H1 (cell line): ENCODE measurements at regions of chr2 and their contacts with region 1.

Region 1: GRCh38 chr2:227766373-227766883 is 20.7 kb downstream of the SCYGR8 start:
- DNase-seq: peak; percentile 70 to 89
- H3K4me3 ChIP-seq: no peak overlapping the region
- H3K27ac ChIP-seq: no peak overlapping the region
- H3K4me1 ChIP-seq: no peaks in the 10 kb centered on the region
- H3K27me3 ChIP-seq: no peaks in the 10 kb centered on the region
- CTCF ChIP-seq: peak; percentile 75 to 91 (median 84)
- EP300 ChIP-seq: no peak
- POLR2A ChIP-seq: no peak
- RAD21 ChIP-seq: peak; percentile 99 to 100

Region 2: DNA sequence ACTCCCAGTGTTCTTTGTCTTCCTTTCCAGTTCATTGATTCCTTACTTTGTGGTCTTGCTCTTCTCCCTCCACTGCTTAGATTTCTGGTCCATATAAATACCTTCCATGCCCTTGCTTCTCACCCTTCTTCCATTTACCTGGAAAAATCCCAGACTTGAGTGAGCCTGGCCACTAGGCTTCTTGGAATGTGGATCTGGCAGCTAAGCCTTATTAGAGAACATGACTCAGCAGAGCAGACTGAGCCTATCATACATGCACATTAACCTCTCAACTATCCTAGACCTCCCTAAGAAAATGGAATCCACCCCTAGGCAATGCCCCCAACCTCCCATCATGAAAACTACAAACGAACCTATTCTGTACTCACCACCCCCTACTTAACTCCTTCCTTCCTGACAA is 802.9 kb before region 1 on chr2:
- CTCF ChIA-PET with region 1: no interaction called
- POLR2A ChIA-PET with region 1: no interaction called
- DNase-seq: no peak
- H3K4me3 ChIP-seq: no peak overlapping the region
- H3K27ac ChIP-seq: no peak overlapping the region
- H3K4me1 ChIP-seq: peaks cover 0 to 6% (median 0%) of the 10 kb centered on the region in 4 experiments; a peak in 2 of 7 replicates
- H3K27me3 ChIP-seq: no peaks in the 10 kb centered on the region
- CTCF ChIP-seq: no peak
- EP300 ChIP-seq: no peak
- POLR2A ChIP-seq: no peak
- RAD21 ChIP-seq: no peak

Region 3: DNA sequence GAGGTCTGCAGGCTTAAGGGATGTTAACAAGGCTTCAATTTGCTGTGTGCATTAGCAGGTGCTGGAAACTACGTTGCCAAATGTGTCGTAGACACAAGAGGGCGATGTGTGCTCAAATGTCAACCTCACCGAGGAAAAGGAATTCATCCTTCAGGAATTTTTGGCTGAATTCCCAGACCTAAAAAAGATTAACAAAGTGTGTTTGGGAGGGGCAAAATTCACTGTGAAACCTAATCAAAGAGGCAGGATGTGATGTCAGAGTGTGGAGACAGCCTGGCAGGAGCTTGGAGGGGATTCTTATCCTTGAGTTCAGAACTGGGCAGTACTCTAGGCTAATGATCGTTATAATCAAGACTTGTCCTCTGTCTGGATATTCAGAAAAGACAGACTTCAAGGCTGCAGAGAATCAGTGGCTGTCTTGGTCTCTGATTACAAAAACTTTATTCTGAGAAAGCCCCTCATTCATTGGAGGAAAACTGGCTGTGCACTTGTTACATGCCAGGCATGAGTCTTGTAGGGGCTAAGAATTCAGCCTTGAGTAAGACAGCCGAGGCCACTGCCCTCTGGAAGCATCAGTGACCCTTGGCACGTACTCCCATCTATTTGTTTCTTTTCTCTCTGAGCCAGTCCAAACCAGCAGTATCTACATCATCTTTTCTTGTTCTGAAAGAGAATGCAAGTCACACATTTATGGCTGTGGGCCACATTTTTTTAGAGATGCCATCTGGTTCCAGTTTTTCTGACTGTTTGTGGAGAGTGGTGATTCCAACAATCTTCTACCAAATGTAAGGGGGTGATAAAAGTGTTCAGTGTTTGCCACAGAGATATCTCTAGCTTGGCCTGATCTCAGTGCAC is 360.0 kb before region 1 on chr2:
- CTCF ChIA-PET with region 1: interaction called, 35 read pairs
- POLR2A ChIA-PET with region 1: no interaction called
- DNase-seq: peak; percentile 51 to 53
- H3K4me3 ChIP-seq: no peak overlapping the region
- H3K27ac ChIP-seq: no peak overlapping the region
- H3K4me1 ChIP-seq: no peaks in the 10 kb centered on the region
- H3K27me3 ChIP-seq: no peaks in the 10 kb centered on the region
- CTCF ChIP-seq: peak; percentile 50 to 86 (median 77)
- EP300 ChIP-seq: no peak
- POLR2A ChIP-seq: no peak; a peak in 1 of 3 replicates
- RAD21 ChIP-seq: peak; percentile 92 to 94

Region 4: GRCh38 chr2:227643990-227644551 is 122.4 kb before region 1 on chr2:
- CTCF ChIA-PET with region 1: interaction called, 21 read pairs
- POLR2A ChIA-PET with region 1: no interaction called
- DNase-seq: no peak
- H3K4me3 ChIP-seq: no peak overlapping the region
- H3K27ac ChIP-seq: no peak overlapping the region
- H3K4me1 ChIP-seq: peaks cover 0 to 3% (median 0%) of the 10 kb centered on the region in 4 experiments; a peak in 1 of 7 replicates
- H3K27me3 ChIP-seq: no peaks in the 10 kb centered on the region
- CTCF ChIP-seq: peak in 1 of 3 experiments; percentile 26; a peak in 2 of 4 replicates
- EP300 ChIP-seq: no peak
- POLR2A ChIP-seq: no peak
- RAD21 ChIP-seq: no peak; a peak in 1 of 4 replicates

Region 5: GRCh38 chr2:227665189-227665940 is 101.1 kb before region 1 on chr2:
- CTCF ChIA-PET with region 1: interaction called, 92 read pairs
- POLR2A ChIA-PET with region 1: no interaction called
- DNase-seq: no peak
- H3K4me3 ChIP-seq: no peak overlapping the region
- H3K27ac ChIP-seq: no peak overlapping the region
- H3K4me1 ChIP-seq: peaks cover 0 to 10% (median 4%) of the 10 kb centered on the region in 4 experiments; a peak in 4 of 7 replicates
- H3K27me3 ChIP-seq: no peaks in the 10 kb centered on the region
- CTCF ChIP-seq: no peak
- EP300 ChIP-seq: no peak
- POLR2A ChIP-seq: no peak
- RAD21 ChIP-seq: no peak

Region 6: DNA sequence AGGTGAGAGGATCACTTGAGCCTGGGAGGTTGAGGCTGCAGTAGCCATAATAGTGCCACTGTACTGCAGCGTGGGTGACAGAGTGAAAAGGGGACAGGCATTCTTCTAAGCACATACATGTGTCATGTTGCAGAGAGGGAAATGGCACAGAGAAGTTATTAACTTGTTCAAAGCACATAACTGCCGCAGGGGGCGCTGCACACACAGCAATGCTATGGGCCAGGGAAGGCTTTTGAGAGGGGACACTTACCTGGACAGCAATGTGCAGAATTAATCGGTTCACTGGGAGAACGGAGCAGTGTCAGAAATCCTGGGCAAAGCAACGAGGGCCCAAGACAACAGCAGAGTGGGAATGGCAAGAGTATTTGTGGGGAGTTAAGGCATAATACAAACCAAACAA is 18.3 kb before region 1 on chr2:
- CTCF ChIA-PET with region 1: interaction called, 44 read pairs
- POLR2A ChIA-PET with region 1: no interaction called
- DNase-seq: peak in 1 of 2 experiments; percentile 82
- H3K4me3 ChIP-seq: no peak overlapping the region
- H3K27ac ChIP-seq: no peak overlapping the region
- H3K4me1 ChIP-seq: peaks cover 0 to 3% (median under 1%) of the 10 kb centered on the region in 4 experiments; a peak in 1 of 7 replicates
- H3K27me3 ChIP-seq: no peaks in the 10 kb centered on the region
- CTCF ChIP-seq: peak; percentile 72 to 89 (median 77)
- EP300 ChIP-seq: no peak
- POLR2A ChIP-seq: no peak
- RAD21 ChIP-seq: peak; percentile 67 to 70

Region 7: GRCh38 chr2:227862227-227862740 is 95.9 kb after region 1 on chr2:
- CTCF ChIA-PET with region 1: interaction called, 32 read pairs
- POLR2A ChIA-PET with region 1: no interaction called
- DNase-seq: no peak
- H3K4me3 ChIP-seq: no peak overlapping the region
- H3K27ac ChIP-seq: no peak overlapping the region
- H3K4me1 ChIP-seq: peaks cover 3 to 11% (median 5%) of the 10 kb centered on the region in 4 experiments; a peak in 6 of 7 replicates
- H3K27me3 ChIP-seq: no peaks in the 10 kb centered on the region
- CTCF ChIP-seq: peak in 2 of 3 experiments; percentile 42 to 57; a peak in 2 of 4 replicates
- EP300 ChIP-seq: no peak
- POLR2A ChIP-seq: no peak
- RAD21 ChIP-seq: peak; percentile 48 to 50